Left cardiac atrium (tissue), 4 donors: ENCODE measurements at regions of chr20 and their contacts with region 1.

Region 1: GRCh38 chr20:354298-355064 is 7.6 kb downstream of the NRSN2 start:
- DNase-seq: peak; percentile 72
- ATAC-seq: peak; percentile 89 to 93

Region 2: GRCh38 chr20:313948-314347 is 40.5 kb before region 1 on chr20:
- intact Hi-C with region 1: no loop called
- DNase-seq: no peak
- ATAC-seq: no peak

Region 3: GRCh38 chr20:407133-407952 is 52.9 kb after region 1 on chr20:
- intact Hi-C with region 1: loop called in 1 of 2 experiments (anchors 10 kb)
- DNase-seq: peak; percentile 83
- ATAC-seq: peak; percentile 62 to 75

Region 4: DNA sequence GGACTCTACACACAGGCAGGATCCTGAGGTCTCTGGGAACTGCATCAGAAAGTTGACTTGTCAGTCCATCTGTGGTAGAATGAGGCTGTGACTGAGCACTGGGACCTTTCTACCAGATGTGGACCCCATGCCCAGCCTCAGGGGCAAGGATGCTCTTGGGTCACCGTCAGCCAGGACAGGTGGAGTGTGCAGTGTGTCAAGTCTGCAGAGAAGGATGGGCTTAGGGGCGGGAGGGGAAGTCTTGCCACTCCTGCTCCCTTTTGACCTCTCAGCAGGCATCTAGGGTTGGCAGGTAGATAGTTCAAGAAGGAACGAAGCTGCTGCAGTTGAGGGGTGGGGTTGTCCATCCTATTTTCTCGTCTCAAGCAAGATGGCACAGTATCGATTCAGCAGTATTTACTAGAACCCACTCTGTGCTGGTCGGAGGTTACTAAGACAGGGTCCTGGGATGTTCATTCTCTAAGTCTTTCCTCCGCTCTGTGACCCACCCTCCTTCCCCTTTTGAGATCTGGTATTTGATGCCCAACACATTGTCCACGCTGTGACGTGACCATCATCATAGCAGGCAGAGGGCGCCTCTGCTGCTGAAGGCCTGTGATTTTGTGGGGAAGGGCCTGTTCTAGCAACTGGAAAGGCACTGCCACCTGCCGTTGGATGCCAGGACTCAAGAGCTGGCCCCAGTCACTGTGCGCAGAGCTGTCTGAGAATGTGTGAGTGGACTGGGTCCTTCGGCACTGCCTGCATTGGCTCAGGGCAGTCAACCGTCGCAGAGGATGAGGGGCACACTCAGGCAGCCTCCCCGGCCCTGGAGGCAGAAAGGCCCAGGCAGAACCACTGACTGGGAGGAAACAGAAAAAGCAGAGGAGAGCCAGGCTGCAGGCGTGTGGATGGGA is 76.8 kb after region 1 on chr20:
- intact Hi-C with region 1: loop called in 1 of 2 experiments (anchors 2 kb)
- DNase-seq: peak; percentile 56
- ATAC-seq: peak; percentile 63 to 80

Region 5: GRCh38 chr20:478949-479429 is 124.5 kb after region 1 on chr20:
- intact Hi-C with region 1: loop called (anchors 1 to 5 kb)
- DNase-seq: no peak
- ATAC-seq: peak; percentile 10 to 22

Region 6: GRCh38 chr20:733861-734260 is 379.4 kb after region 1 on chr20:
- intact Hi-C with region 1: loop called in 1 of 2 experiments (anchors 10 kb)
- DNase-seq: no peak
- ATAC-seq: no peak